SK-N-SH (cell line): ENCODE measurements at regions of chr15 and their contacts with region 1.

Region 1: GRCh38 chr15:65054333-65055200 is 9.4 kb downstream of the SLC51B start:
- DNase-seq: peak; percentile 92
- H3K4me3 ChIP-seq: no peak overlapping the region; a peak in 1 of 4 replicates
- H3K27ac ChIP-seq: no peak overlapping the region; a peak in 1 of 4 replicates
- H3K4me1 ChIP-seq: peaks cover 0 to 9% of the 10 kb centered on the region in 2 experiments; a peak in 1 of 4 replicates
- H3K27me3 ChIP-seq: no peaks in the 10 kb centered on the region
- CTCF ChIP-seq: peak; percentile 87
- EP300 ChIP-seq: no peak
- RAD21 ChIP-seq: peak; percentile 93

Region 2: DNA sequence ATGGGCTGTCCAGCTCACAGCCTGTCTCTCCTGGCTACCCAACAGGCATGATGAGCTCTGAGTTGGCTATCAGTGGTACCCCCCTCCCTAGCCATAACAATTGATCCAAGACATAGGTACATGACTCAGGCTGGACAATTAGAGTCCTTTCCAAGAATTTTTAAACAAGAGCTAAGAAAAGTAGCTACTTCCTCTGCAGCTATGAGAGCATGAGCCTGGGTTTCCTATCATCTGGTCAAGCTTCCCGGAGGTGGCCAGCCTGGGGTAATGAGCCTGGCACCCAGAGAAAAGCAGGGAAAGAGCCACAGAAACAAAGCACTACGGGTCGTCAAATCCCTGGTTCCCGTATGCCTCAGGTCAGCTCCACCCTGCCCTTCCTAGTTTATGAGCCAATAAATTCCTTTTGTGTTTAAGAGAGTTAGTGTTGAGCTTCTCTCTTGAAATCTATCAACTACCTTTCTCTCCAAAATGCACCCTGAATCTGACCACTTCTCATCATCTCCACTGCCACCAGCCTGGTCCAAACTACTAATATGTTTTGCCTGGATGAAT is 11.7 kb before region 1 on chr15:
- CTCF ChIA-PET with region 1: interaction called, 15 read pairs
- POLR2A ChIA-PET with region 1: no interaction called
- DNase-seq: no peak
- H3K4me3 ChIP-seq: no peak overlapping the region
- H3K27ac ChIP-seq: no peak overlapping the region
- H3K4me1 ChIP-seq: peaks cover 0 to 7% of the 10 kb centered on the region in 2 experiments; a peak in 1 of 4 replicates
- H3K27me3 ChIP-seq: no peaks in the 10 kb centered on the region
- CTCF ChIP-seq: no peak
- EP300 ChIP-seq: no peak
- RAD21 ChIP-seq: no peak

Region 3: GRCh38 chr15:65069179-65069578 is 14.6 kb after region 1 on chr15:
- CTCF ChIA-PET with region 1: interaction called, 88 read pairs
- POLR2A ChIA-PET with region 1: no interaction called
- DNase-seq: no peak
- H3K4me3 ChIP-seq: no peak overlapping the region
- H3K27ac ChIP-seq: no peak overlapping the region
- H3K4me1 ChIP-seq: peaks cover 0 to 12% of the 10 kb centered on the region in 2 experiments; a peak in 1 of 4 replicates
- H3K27me3 ChIP-seq: peaks cover 9% of the 10 kb centered on the region; the same call in 1 of the 2 replicates
- CTCF ChIP-seq: no peak
- EP300 ChIP-seq: no peak
- RAD21 ChIP-seq: no peak

Region 4: DNA sequence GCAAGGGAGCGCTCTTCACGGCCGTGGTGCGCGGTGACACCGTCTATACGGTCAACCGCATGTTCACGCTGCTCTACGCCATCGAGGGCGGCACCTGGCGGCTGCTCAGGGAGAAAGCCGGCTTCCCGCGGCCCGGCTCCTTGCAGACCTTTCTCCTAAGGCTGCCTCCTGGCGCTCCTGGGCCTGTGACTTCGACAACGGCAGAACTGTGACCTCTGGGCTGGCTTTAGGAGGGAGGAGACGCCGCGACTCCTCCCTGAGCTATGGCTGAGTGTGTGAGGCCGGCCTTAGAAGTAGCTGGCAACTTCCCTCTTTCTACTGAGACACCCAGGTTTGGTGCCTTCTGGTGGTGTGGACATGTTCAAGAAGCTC is 23.4 kb after region 1 on chr15:
- CTCF ChIA-PET with region 1: interaction called, 99 read pairs
- POLR2A ChIA-PET with region 1: no interaction called
- DNase-seq: peak; percentile 61
- H3K4me3 ChIP-seq: no peak overlapping the region
- H3K27ac ChIP-seq: no peak overlapping the region
- H3K4me1 ChIP-seq: peaks cover 0 to 3% of the 10 kb centered on the region in 2 experiments; a peak in 1 of 4 replicates
- H3K27me3 ChIP-seq: 0 out of 2 replicates have a peak, but pooled peaks cover 6% of the 10 kb centered on the region
- CTCF ChIP-seq: peak; percentile 49
- EP300 ChIP-seq: no peak
- RAD21 ChIP-seq: 0 out of 2 replicates have a peak, but pooled peaks have one; percentile 21

Region 5: GRCh38 chr15:65298731-65299130 is 244.2 kb after region 1 on chr15:
- CTCF ChIA-PET with region 1: interaction called, 17 read pairs
- POLR2A ChIA-PET with region 1: no interaction called
- DNase-seq: no peak
- H3K4me3 ChIP-seq: no peak overlapping the region
- H3K27ac ChIP-seq: no peak overlapping the region
- H3K4me1 ChIP-seq: peaks cover 5% of the 10 kb centered on the region in 2 experiments; a peak in 2 of 4 replicates
- H3K27me3 ChIP-seq: no peaks in the 10 kb centered on the region
- CTCF ChIP-seq: no peak
- EP300 ChIP-seq: no peak
- RAD21 ChIP-seq: no peak